Sigmoid colon (tissue), 7 donors: ENCODE measurements at regions of chr16 and their contacts with region 1.

Region 1: GRCh38 chr16:49608779-49609178 is 235.2 kb downstream of the C16orf78 start:
- DNase-seq: peak; percentile 68
- H3K4me3 ChIP-seq: no peak overlapping the region
- H3K27ac ChIP-seq: peak overlapping the region in 2 of 4 donors; percentile 25 to 51
- H3K4me1 ChIP-seq: peaks cover 0 to 16% (median 13%) of the 10 kb centered on the region in 4 donors
- H3K27me3 ChIP-seq: no peaks in the 10 kb centered on the region
- CTCF ChIP-seq: peak; percentile 10 to 61 (median 26)
- EP300 ChIP-seq: no peak
- POLR2A ChIP-seq: no peak

Region 2: GRCh38 chr16:49524216-49524946 is 84.4 kb before region 1 on chr16:
- intact Hi-C with region 1: no loop called
- DNase-seq: no peak
- H3K4me3 ChIP-seq: no peak overlapping the region
- H3K27ac ChIP-seq: no peak overlapping the region
- H3K4me1 ChIP-seq: peaks cover 0 to 10% (median 6%) of the 10 kb centered on the region in 4 donors
- H3K27me3 ChIP-seq: no peaks in the 10 kb centered on the region
- CTCF ChIP-seq: no peak
- EP300 ChIP-seq: no peak
- POLR2A ChIP-seq: no peak

Region 3: DNA sequence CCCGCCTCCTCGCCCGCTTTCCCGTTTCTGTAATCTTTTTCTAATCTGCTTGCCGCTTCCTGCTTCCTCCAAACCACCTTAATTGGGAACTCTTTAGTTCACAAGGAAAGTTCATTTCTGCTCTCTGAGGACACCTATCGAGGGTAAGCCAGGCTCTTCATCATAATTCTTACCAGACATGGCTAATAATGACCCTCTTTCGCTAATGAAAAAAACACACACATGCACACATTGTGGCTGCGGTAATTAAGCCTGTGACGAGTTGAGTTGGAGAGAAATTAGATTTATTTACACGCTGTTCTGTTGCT is 146.5 kb after region 1 on chr16:
- intact Hi-C with region 1: no loop called
- DNase-seq: no peak
- H3K4me3 ChIP-seq: peak overlapping the region in 3 of 4 donors; percentile 45 to 55 (median 47)
- H3K27ac ChIP-seq: peak overlapping the region; percentile 38 to 69 (median 58)
- H3K4me1 ChIP-seq: peaks cover 0 to 22% (median 21%) of the 10 kb centered on the region in 4 donors
- H3K27me3 ChIP-seq: no peaks in the 10 kb centered on the region
- CTCF ChIP-seq: peak in 1 of 4 experiments; percentile 34
- EP300 ChIP-seq: no peak
- POLR2A ChIP-seq: no peak

Region 4: DNA sequence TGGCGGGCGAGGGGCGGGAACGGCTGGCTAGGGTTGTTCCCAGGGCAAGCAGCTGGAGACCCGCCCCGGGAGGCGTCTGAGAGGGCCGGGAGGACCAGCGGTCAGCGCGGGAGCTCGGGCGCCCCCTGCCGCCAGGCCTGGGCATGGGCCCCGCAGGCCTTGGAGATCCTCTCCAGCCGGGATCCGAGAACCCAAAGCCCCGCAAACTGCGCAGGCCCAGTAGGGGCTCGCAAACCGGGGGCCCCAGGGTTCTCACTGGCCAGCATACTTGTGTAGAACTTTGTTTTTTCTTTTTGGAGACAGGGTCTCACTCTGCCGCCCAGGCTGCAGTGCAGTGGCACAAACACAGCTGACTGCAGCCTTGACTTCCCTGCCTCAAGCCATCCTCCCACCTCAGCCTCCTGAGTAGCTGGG is 267.9 kb after region 1 on chr16:
- intact Hi-C with region 1: loop called (anchors 5 kb)
- DNase-seq: peak; percentile 84
- H3K4me3 ChIP-seq: peak overlapping the region; percentile 22 to 49 (median 42)
- H3K27ac ChIP-seq: peak overlapping the region in 3 of 4 donors; percentile 30 to 42 (median 42)
- H3K4me1 ChIP-seq: peaks cover 0 to 11% (median 9%) of the 10 kb centered on the region in 4 donors
- H3K27me3 ChIP-seq: peaks cover 0 to 14% (median 9%) of the 10 kb centered on the region in 3 donors
- CTCF ChIP-seq: peak; percentile 47 to 94 (median 72)
- EP300 ChIP-seq: no peak
- POLR2A ChIP-seq: no peak